Dorsolateral prefrontal cortex (tissue), 120 donors: ENCODE measurements at regions of chr4 and their contacts with region 1.

Region 1: DNA sequence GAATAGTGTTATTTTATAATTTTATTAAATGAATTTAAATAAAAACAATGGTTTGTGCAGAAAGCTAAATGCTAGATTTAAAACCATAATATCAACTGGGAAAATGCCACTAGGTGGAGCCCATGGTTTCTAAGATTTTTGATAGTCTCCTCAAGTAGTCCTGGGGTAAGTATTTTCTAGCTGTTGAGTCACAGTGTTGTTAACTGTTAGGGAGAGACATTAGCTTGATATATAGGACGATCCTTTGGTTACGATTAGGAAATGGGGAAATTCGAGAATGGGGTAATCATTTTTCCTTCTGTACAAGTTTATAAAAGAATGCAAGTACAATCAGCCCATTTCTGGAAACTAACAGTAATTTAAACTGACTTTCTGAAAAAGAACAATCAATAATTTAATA is 378.4 kb downstream of the ANKRD50 start:
- DNase-seq: no peak
- H3K4me3 ChIP-seq: no peak overlapping the region
- H3K27ac ChIP-seq: no peak overlapping the region
- H3K27me3 ChIP-seq: no peaks in the 10 kb centered on the region
- CTCF ChIP-seq: peak; percentile 50 to 88 (median 69)

Region 2: DNA sequence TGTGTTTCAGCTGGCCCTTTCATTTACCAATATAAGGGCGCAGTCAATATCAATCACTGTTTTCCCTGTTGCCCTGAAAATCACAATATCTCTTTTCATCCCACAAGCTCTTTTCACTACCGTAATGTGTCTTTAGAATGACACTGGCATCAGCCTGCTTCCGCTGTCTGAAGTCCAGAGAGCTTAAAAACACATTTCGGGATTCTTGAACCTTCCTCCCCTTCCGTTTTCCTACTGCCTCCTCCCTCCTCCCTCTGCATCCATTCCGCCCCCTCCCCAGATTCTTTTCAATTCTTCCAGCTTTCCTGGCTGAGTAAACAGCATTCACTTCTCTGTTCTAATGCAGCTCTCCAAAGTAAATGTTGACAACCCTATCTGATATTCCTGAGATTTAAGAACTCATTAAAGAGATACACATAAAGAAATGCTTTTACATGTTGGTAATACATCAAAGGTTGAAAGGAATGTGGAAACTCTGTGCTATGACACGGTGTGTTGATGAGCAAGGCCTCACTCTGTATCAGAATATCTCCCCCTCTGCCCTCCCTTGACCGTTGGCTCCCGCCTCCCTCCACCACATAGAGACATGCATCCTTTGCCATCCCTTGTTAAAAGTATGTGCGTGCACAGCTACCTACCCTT is 1021.0 kb before region 1 on chr4:
- intact Hi-C with region 1: no loop called
- DNase-seq: no peak
- H3K4me3 ChIP-seq: peak overlapping the region in 28 of 59 donors; percentile 2 to 48 (median 22)
- H3K27ac ChIP-seq: peak overlapping the region in 12 of 59 donors; percentile 4 to 48 (median 22)
- H3K27me3 ChIP-seq: no peaks in the 10 kb centered on the region
- CTCF ChIP-seq: no peak

Region 3: DNA sequence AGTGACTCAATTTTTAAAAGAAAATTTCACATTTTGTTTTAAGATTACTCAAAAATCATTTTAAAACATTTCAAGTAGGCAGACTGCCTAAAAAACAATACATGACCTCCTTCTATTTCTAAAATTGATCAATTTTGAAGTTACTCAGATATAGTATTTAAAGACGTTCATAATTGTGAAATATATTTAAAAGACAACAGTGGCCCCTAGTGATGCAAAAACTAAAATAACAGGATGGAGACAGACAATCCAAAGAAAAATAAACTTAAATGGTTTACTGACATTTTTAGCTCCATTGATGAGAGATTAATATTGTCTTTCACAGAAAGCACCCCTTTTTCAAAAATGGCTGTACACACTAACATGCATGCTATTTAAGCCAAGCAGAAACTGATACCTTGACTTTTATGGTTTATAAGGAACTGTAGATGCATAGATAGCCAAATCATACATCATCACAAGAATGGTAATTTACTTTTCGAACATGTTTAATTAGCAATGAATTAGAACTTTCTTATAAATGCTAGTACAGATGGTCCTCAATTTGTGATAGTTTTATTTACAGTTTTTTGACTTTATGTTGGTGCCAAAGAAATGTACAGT is 910.8 kb after region 1 on chr4:
- intact Hi-C with region 1: loop called (anchors 5 to 10 kb)
- DNase-seq: no peak
- H3K4me3 ChIP-seq: no peak overlapping the region
- H3K27ac ChIP-seq: no peak overlapping the region
- H3K27me3 ChIP-seq: peaks cover 0 to 10% (median 0%) of the 10 kb centered on the region in 45 donors
- CTCF ChIP-seq: peak in 55 of 56 donors; percentile 20 to 80 (median 54)

Region 4: DNA sequence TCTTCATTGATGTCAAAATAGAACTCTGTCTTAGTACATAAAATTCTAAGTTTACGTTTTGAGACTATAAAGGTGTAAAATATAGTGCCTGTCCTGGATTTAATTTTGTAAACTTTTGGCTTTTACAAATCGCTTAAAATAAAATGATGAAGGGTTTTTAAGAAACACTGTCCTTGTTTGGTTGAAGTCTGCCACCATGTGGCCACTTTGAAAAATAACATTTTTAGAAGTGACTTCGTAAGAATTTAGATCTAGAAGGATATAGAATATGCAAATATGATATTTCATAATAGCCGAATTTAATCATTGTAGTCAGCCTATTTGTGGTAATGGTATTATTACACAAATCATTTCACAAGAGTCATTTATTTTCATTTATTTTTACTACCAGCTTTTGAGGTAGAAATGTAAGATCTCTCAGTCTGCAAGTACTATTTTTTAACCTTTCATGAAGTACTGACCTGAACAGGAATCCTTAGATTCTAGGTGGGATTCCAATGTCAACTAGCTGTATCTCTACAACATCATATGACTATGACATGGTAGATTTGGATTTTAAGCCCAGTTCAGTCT is 949.7 kb after region 1 on chr4:
- intact Hi-C with region 1: loop called in 1 of 2 experiments (anchors 10 kb)
- DNase-seq: no peak
- H3K4me3 ChIP-seq: no peak overlapping the region
- H3K27ac ChIP-seq: no peak overlapping the region
- H3K27me3 ChIP-seq: no peaks in the 10 kb centered on the region
- CTCF ChIP-seq: peak; percentile 54 to 84 (median 71)